CD4-positive, alpha-beta T cell (primary cell): ENCODE measurements at regions of chr17 and their contacts with region 1.

Region 1: GRCh38 chr17:4827399-4827798 is 5.7 kb upstream of the MINK1 start:
- DNase-seq: no peak
- ATAC-seq: no peak
- H3K4me3 ChIP-seq: no peak overlapping the region
- H3K4me3 Mint-ChIP-seq: no peak overlapping the region
- H3K27ac ChIP-seq: no peak overlapping the region
- H3K27ac Mint-ChIP-seq: no peak overlapping the region
- H3K4me1 ChIP-seq: peaks cover 1% of the 10 kb centered on the region
- H3K4me1 Mint-ChIP-seq: peaks cover 2% of the 10 kb centered on the region
- H3K27me3 ChIP-seq: no peaks in the 10 kb centered on the region
- H3K27me3 Mint-ChIP-seq: no peaks in the 10 kb centered on the region
- CTCF ChIP-seq: no peak

Region 2: GRCh38 chr17:4635823-4636375 is 191.5 kb before region 1 on chr17:
- CTCF ChIA-PET with region 1: no interaction called
- POLR2A ChIA-PET with region 1: no interaction called
- intact Hi-C with region 1: no loop called
- DNase-seq: peak in 1 of 14 experiments; percentile 20
- ATAC-seq: no peak
- H3K4me3 ChIP-seq: no peak overlapping the region
- H3K4me3 Mint-ChIP-seq: no peak overlapping the region
- H3K27ac ChIP-seq: no peak overlapping the region
- H3K27ac Mint-ChIP-seq: no peak overlapping the region
- H3K4me1 ChIP-seq: peaks cover 11% of the 10 kb centered on the region
- H3K4me1 Mint-ChIP-seq: peaks cover 18% of the 10 kb centered on the region
- H3K27me3 ChIP-seq: peaks cover 35 to 38% of the 10 kb centered on the region in 2 experiments
- H3K27me3 Mint-ChIP-seq: peaks cover 75% of the 10 kb centered on the region
- CTCF ChIP-seq: no peak

Region 3: GRCh38 chr17:4806777-4807604 is 20.4 kb before region 1 on chr17 and contains the start of gene PLD2:
- CTCF ChIA-PET with region 1: no interaction called
- POLR2A ChIA-PET with region 1: no interaction called
- intact Hi-C with region 1: loop called in 1 of 2 experiments (anchors 2 kb)
- DNase-seq: peak; percentile 68 to 94 (median 84)
- ATAC-seq: peak; percentile 98
- H3K4me3 ChIP-seq: peak within 1 kb of the TSS; percentile 57
- H3K4me3 Mint-ChIP-seq: peak within 1 kb of the TSS; percentile 87
- H3K27ac ChIP-seq: no peak within 1 kb of the TSS
- H3K27ac Mint-ChIP-seq: no peak within 1 kb of the TSS
- H3K4me1 ChIP-seq: peaks cover 12% of the 10 kb centered on the region
- H3K4me1 Mint-ChIP-seq: peaks cover 21% of the 10 kb centered on the region
- H3K27me3 ChIP-seq: no peaks in the 10 kb centered on the region
- H3K27me3 Mint-ChIP-seq: no peaks in the 10 kb centered on the region
- CTCF ChIP-seq: no peak
- total RNA-seq, gene PLD2: 10.2 to 10.7 TPM